Left colon (tissue), 2 donors: ENCODE measurements at regions of chr11 and their contacts with region 1.

Region 1: DNA sequence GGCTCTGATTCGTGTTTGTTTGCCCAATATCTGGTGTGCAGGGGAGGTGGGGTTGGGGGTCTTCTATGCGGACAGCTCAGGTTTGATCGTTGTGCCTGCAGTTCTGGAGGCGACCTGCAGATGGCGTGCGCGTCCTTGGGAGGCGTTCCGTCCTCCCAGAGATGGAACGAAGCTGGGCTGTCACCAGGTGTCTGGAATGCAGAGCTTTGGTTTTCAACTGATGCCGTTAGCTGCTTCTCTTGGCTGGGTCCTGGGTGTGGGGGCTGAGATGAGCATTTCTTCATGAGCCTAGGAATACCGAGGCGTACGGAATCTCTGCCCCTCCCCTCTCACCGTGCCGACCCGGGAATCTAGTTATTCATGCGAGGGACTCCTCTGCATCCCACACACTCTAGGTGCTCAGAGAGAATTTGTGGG is 98.6 kb downstream of the CEP164 start:
- DNase-seq: peak; percentile 41 to 71
- ATAC-seq: peak; percentile 68

Region 2: DNA sequence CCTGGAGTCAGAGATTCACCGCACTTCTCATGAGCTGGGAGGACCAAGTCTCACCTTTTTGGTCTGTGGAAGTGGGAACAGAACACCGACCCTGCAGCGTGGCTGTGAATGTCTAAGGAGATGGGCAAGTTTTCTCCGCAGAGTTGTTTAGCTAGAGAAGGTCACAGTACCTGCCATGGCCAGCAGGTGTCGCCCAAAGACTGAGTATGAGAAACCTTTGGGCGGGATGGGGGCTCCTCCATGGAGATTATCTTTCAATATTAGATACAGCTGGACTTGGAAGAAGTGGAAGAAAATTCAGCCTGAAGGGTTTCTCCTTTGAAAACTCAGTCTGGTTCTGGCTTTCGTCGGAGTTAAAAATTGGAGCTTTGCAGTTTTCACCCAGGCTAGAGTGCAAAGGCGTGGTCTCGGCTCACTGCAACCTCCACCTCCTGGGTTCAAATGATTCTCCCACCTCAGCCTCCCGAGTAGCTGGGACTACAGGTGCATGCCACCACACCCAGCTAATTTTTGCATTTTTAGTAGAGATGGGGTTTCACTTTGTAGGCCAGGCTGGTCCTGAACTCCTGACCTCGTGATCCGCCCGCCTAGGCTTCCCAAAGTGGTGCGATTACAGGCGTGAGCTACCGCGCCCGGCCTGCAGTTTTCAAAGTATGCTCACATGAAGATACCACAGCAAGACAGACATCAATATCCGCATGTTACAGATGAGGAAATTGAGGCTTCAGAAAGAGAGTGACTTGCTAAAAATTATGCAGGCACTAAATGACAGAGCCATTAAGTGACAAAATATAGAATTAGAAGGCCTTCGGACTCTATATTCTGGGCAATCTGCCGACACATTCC is 381.4 kb after region 1 on chr11:
- intact Hi-C with region 1: loop called (anchors 5 to 10 kb)
- DNase-seq: peak in 1 of 2 donors; percentile 93
- ATAC-seq: peak; percentile 43

Region 3: DNA sequence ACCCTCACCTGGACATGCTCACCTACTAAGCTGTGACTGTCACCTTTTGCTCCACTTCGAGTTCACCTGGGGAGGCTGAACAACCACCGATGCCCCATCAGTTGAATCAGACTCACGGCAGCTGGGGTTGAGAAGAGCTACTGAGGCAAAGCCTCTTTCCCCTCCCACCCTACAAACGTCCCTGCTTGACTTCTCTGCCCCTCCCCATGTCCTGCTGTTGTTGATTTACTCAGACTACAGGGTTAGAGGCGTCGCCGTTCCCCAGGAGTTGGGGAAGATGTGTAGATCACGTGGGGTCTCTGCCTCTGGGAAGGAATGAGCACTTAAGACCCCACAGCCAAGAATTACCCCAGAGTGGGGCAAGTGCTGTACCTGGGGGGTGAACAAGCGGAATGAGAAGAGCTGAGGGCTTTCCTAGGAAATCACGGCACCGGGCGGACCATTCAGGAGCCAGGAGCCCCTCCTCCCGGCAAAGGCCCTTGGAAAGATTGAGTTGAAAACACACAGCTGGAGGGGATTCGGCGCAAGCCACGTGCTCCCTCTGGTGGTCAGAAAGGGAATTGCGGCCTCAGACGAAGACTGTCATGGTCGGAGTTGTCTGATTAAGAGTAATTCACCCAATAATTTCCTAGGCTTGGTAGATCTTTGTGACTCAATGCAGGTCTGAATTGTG is 391.2 kb after region 1 on chr11:
- intact Hi-C with region 1: loop called in 1 of 2 experiments (anchors 10 kb)
- DNase-seq: peak; percentile 65 to 85
- ATAC-seq: peak; percentile 32